Activated T-helper 2 cell treated with anti-CD3 and anti-CD28 coated beads, Interferon-gamma antibody, Interleukin-2, Interleukin-4, amounts not matched to agents 10 μg/mL and 5 μg/mL and 100 μg/mL, durations not matched to agents 14 hours and 24 hours and 36 hours (primary cell): ENCODE measurements at regions of chr7 and their contacts with region 1.

Region 1: DNA sequence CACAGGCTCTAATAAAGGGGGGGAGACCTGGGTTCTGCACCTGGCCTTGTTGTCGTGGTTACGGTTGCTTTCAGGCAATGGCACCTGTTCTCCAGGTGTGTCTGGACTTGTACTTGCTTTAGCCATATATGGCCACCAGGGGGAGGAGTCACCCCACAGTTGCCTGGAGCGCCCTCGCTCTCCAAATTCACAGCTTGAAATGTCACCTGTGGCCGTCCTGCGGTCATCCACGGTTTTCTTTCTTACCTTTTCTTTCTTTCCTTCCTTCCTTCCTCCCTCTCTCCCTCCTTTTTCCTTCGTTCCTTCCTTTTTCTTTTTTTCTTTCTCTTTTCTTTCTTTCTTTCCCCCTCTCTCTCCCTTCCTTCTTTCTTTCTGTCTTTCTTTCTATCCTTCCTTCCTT is 157.2 kb upstream of the ZNF92 start:
- DNase-seq: peak; percentile 43
- H3K4me3 Mint-ChIP-seq: no peak overlapping the region
- H3K27ac Mint-ChIP-seq: no peak overlapping the region
- H3K4me1 Mint-ChIP-seq: peaks cover 2% of the 10 kb centered on the region
- H3K27me3 Mint-ChIP-seq: no peaks in the 10 kb centered on the region

Region 2: DNA sequence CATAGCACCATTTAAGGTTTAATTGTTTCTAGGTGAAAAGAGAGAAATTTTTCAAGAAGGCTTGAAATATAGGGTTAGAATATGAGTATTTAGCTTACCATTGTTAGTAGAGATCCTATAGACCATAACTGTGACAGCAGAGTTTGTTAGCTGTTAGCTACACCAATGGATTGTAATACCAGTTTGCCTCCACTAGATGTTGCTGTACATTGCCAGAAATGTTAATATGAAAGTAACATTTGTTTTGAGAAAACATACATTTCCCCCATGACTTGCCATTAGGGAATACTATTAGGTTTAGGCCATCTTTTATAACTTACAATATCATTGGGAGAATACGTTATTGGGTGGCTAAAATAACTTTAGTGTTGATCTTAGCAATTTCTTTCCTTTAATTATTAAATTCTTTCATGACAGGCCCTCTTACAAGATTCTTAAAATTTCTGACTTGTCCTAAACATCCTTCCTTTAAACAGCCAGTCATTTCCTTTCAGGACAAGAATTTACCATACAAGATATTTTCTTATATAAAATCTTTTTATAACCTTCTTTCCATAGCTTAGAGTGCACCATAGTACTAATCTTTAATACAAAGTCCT is 265.1 kb before region 1 on chr7:
- intact Hi-C with region 1: loop called (anchors 5 kb)
- DNase-seq: no peak
- H3K4me3 Mint-ChIP-seq: no peak overlapping the region
- H3K27ac Mint-ChIP-seq: no peak overlapping the region
- H3K4me1 Mint-ChIP-seq: no peaks in the 10 kb centered on the region
- H3K27me3 Mint-ChIP-seq: peaks cover 21% of the 10 kb centered on the region

Region 3: GRCh38 chr7:65233409-65234019 is 17.1 kb after region 1 on chr7:
- intact Hi-C with region 1: no loop called
- DNase-seq: no peak
- H3K4me3 Mint-ChIP-seq: no peak overlapping the region
- H3K27ac Mint-ChIP-seq: no peak overlapping the region
- H3K4me1 Mint-ChIP-seq: peaks cover 6% of the 10 kb centered on the region
- H3K27me3 Mint-ChIP-seq: peaks cover 5% of the 10 kb centered on the region

Region 4: DNA sequence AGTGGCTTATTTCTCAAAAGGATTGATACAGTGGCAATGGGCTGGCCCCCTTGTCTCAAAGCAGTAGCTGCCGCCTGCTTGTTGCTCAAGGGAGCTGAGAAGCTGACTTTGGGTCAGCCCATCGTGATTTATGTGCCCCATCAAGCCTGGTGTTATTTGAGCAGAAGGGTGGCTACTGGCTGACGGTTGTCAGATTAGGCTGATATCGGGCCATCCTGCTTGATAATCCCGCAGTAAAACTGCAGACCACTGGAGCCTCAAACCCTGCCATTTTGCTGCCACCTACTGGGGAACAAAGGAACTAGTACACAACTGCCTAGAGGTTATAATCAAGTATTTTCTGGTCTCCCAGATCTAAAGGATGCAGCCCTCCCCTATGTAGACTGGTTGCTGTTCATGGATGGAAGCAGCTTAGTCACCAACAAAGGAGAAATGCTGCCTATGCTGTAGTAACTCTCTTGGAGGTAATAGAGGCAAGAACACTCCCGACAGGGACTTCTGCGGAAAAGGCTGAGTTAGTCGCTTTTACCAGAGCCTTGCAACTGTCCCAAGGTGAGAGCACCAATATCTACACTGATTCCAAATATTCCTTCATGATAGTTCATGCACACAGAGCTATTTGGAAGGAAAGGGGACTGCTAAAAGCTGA is 91.3 kb after region 1 on chr7:
- intact Hi-C with region 1: loop called (anchors 2 kb)
- DNase-seq: peak; percentile 18
- H3K4me3 Mint-ChIP-seq: no peak overlapping the region
- H3K27ac Mint-ChIP-seq: no peak overlapping the region
- H3K4me1 Mint-ChIP-seq: no peaks in the 10 kb centered on the region
- H3K27me3 Mint-ChIP-seq: no peaks in the 10 kb centered on the region